ENCODE measurements at regions of chr17 and their contacts with region 1.

Region 1: GRCh38 chr17:51764387-51764972 is 394.0 kb downstream of the CA10 start:
- DNase-seq: no peak

Region 2: GRCh38 chr17:51739245-51739974 is 25.1 kb before region 1 on chr17:
- intact Hi-C with region 1: no loop called
- DNase-seq: no peak

Region 3: DNA sequence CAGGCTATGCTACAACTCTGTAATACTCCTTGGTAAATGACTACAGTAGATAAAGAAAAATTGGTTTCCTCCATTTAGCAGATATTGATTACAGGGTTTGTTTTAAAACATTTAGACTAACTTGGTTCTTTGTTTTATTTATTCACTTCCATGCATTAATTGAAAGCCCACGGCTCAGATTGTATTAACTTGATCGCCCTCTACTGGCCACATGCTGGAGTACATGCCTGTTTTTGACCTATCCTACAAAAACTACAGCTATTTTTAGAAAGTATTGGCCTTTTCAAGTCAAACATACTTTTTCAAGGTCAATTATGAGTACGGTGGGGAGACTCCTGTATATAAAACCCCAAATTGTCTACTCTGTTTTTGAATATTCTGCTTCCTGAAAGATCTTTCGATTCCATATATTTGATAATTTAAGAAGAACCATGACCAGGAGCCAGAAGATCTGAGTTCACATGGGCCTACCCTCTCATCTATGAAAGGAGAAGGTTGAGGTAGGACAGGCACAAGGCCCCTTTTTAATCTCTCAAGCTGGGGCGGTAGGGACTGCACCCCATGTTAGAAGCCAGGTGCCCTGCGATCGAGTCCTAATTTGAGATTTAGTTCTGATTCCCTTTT is 342.3 kb after region 1 on chr17:
- intact Hi-C with region 1: loop called (anchors 5 to 10 kb)
- DNase-seq: no peak

Region 4: DNA sequence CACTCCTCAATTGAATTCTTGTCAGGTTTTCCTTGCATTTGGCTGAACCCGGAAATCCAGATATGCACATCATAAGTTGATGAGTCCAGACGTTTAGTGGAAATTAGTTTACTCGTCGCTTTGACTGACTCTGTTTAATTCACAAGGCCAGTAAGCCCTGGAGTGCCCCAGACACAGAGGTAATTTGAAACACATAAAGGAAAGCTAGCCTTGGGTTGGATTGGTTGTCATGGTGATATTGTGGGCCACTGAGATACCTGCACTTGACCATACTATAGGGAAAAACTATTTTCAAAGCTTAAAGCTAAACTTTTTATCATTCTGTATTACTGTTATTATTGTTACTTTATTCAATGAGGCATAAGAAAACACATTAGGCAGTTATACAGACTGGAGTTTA is 572.3 kb after region 1 on chr17:
- intact Hi-C with region 1: loop called in 1 of 2 experiments (anchors 5 kb)
- DNase-seq: no peak

Measured in posterior vena cava (tissue), 2 donors.